Endothelial cell of umbilical vein (primary cell): ENCODE measurements at regions of chr14 and their contacts with region 1.

Region 1: DNA sequence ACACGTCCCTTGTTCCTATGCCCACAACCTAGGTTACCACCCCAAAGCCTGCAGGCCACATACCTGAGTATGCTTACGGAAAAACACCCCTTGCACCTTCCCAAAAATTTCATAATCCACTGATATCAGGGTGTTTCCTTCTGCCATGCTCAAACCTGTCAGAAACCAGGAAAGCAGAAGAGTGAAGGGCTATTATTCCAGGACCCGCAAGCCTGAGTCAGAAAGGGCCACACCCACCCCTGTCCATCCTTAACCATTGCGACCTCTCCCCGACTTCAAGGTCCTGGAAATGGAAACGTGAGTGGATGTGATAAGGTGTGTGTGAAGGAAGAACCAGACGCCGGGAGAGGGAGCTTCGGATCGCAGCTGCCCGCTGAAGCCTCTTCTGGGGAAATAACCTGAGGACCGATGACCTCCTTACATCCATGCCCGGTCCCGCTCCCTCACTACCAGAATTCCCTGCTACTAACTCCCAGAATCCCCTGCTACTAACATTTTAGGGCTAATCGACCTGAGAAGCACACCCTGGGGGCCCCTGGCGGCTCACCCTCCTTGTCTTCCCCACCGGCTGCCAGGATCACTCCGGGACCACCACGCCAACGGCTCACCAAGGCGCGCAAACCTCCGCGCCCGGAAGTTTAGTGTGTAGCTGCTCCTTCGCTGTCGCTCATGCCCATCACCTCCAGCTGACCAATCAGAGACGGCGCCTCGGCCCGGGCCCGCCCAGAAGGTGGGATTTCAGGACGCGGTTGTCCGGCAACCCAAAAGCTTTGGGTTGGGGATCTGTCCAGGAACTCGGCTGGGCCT is at the start of gene ACYP1:
- DNase-seq: peak; percentile 93
- H3K4me3 ChIP-seq: peak within 1 kb of the TSS; percentile 63 to 79 (median 75)
- H3K27ac ChIP-seq: peak within 1 kb of the TSS; percentile 54
- H3K4me1 ChIP-seq: peaks cover 32% of the 10 kb centered on the region
- H3K27me3 ChIP-seq: no peaks in the 10 kb centered on the region
- CTCF ChIP-seq: no peak
- POLR2A ChIP-seq: peak; percentile 39
- total RNA-seq, gene ACYP1: 34.2 and 37.5 TPM in 2 replicates

Region 2: DNA sequence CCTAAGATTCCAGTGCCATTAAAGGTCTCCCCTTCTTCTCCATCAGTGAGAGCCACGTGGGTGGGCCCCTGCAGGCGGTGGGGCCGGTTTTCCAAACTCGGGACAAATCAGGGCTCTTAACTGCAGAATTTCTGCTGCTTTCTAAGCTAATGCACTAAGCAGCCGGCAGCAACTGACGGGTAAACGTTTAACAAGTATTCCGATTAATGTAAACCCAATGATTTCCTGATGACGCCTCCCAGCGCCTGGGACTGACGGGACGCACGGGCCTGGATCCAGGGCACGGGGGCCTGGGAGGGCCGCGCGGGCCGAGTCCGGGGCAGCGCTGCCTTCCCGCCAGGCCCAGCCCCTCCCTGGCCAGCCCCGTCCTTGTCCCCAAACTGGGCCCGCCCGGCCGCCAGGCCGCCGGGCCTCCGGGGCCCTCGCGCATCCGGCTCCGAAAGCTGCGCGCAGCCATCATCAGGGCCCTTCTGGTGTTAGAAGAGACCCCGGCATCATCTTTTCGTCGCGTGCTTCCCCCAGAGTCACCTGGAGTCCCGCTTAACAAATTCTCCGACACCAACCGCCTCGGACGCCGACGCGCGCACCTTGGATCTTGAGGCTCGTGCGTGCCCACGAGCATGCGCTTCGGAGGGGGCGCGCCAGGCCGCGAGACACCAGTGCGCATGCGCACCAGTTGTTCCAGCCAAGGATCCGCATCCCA is 12.6 kb before region 1 on chr14 and contains the start of gene MLH3:
- CTCF ChIA-PET with region 1: interaction called, 3 read pairs
- POLR2A ChIA-PET with region 1: no interaction called
- dilution Hi-C with region 1: no loop called
- intact Hi-C with region 1: loop called (anchors 1 kb)
- DNase-seq: peak; percentile 85
- H3K4me3 ChIP-seq: peak within 1 kb of the TSS; percentile 21 to 47 (median 38)
- H3K27ac ChIP-seq: peak within 1 kb of the TSS; percentile 50
- H3K4me1 ChIP-seq: peaks cover 11% of the 10 kb centered on the region
- H3K27me3 ChIP-seq: no peaks in the 10 kb centered on the region
- CTCF ChIP-seq: no peak
- POLR2A ChIP-seq: peak; percentile 68
- total RNA-seq, gene MLH3: 14.6 and 16.5 TPM in 2 replicates